IMR-90 (cell line): ENCODE measurements at regions of chr13 and their contacts with region 1.

Region 1: GRCh38 chr13:93182406-93182805 is 44.2 kb upstream of the GPC6 start:
- DNase-seq: no peak
- ATAC-seq: no peak
- H3K4me3 ChIP-seq: no peak overlapping the region
- H3K27ac ChIP-seq: no peak overlapping the region
- H3K4me1 ChIP-seq: peaks cover 3% of the 10 kb centered on the region
- H3K27me3 ChIP-seq: no peaks in the 10 kb centered on the region
- CTCF ChIP-seq: no peak
- POLR2A ChIP-seq: no peak
- RAD21 ChIP-seq: no peak

Region 2: GRCh38 chr13:93045836-93046235 is 136.6 kb before region 1 on chr13:
- CTCF ChIA-PET with region 1: no interaction called
- POLR2A ChIA-PET with region 1: no interaction called
- dilution Hi-C with region 1: no loop called
- in situ Hi-C with region 1: no loop called
- intact Hi-C with region 1: no loop called
- DNase-seq: peak; percentile 58
- ATAC-seq: no peak
- H3K4me3 ChIP-seq: no peak overlapping the region
- H3K27ac ChIP-seq: no peak overlapping the region
- H3K4me1 ChIP-seq: no peaks in the 10 kb centered on the region
- H3K27me3 ChIP-seq: no peaks in the 10 kb centered on the region
- CTCF ChIP-seq: no peak
- POLR2A ChIP-seq: no peak
- RAD21 ChIP-seq: no peak

Region 3: GRCh38 chr13:93158565-93158964 is 23.8 kb before region 1 on chr13:
- CTCF ChIA-PET with region 1: no interaction called
- POLR2A ChIA-PET with region 1: no interaction called
- dilution Hi-C with region 1: no loop called
- in situ Hi-C with region 1: no loop called
- intact Hi-C with region 1: no loop called
- DNase-seq: no peak
- ATAC-seq: no peak
- H3K4me3 ChIP-seq: no peak overlapping the region
- H3K27ac ChIP-seq: no peak overlapping the region
- H3K4me1 ChIP-seq: no peaks in the 10 kb centered on the region
- H3K27me3 ChIP-seq: no peaks in the 10 kb centered on the region
- CTCF ChIP-seq: no peak
- POLR2A ChIP-seq: no peak
- RAD21 ChIP-seq: no peak

Region 4: DNA sequence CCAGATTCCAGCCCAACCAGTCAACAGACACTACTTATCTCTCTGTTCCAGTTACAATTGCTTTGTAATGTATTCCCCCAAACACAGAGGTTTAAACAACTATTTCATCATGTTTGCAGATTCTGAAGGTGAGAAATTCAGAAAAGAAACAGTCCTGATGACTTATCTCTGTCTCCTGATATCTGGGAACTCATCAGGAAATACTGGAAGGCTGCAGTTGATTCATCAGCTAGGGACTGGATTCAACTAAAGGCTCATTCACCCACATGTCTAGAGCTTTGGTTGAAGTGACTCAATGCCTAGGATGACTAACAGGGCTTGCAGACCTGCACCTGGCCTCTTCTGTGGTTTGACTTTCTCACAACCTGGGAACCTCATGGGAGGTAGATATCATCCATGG is 12.4 kb before region 1 on chr13:
- CTCF ChIA-PET with region 1: interaction called, 10 read pairs
- POLR2A ChIA-PET with region 1: no interaction called
- dilution Hi-C with region 1: no loop called
- in situ Hi-C with region 1: no loop called
- intact Hi-C with region 1: no loop called
- DNase-seq: peak; percentile 97
- ATAC-seq: peak; percentile 59
- H3K4me3 ChIP-seq: no peak overlapping the region
- H3K27ac ChIP-seq: no peak overlapping the region
- H3K4me1 ChIP-seq: no peaks in the 10 kb centered on the region; the same call in 1 of the 2 replicates
- H3K27me3 ChIP-seq: no peaks in the 10 kb centered on the region
- CTCF ChIP-seq: no peak
- POLR2A ChIP-seq: no peak
- RAD21 ChIP-seq: no peak